Activated B cell treated with CpG ODN at 0.5 μM for 24 hours (primary cell): ENCODE measurements at regions of chr7 and their contacts with region 1.

Region 1: DNA sequence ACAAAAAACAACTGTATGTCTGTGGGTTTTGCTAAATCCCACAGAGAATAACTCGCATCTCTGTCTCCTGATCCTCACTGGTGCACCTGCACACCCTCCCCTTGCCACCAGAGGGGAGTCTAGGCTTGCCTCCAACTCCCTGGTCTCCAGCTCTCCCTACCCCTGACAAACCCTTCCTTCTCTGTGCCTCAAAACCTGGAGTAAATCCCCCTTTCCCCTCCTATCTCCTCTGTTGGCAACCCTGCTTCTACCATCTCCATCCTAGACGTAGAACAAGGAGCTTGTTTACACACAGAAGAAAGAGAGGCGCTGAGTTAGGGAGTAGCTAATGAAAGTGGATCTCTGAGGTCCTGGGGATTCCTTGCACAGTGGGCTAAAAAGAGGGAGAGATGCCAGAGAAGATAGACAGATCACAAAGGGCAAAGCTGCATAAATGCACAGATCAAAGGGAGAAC is 6.0 kb downstream of the MBLAC1 start:
- DNase-seq: peak; percentile 50
- ATAC-seq: peak; percentile 89
- H3K4me3 Mint-ChIP-seq: no peak overlapping the region
- H3K27ac Mint-ChIP-seq: no peak overlapping the region
- H3K4me1 Mint-ChIP-seq: peaks cover 18% of the 10 kb centered on the region
- H3K27me3 Mint-ChIP-seq: no peaks in the 10 kb centered on the region
- CTCF ChIP-seq: peak; percentile 92

Region 2: GRCh38 chr7:99975782-99976521 is 156.8 kb before region 1 on chr7 and contains the start of gene AZGP1:
- CTCF ChIA-PET with region 1: interaction called, 10 read pairs
- POLR2A ChIA-PET with region 1: no interaction called
- intact Hi-C with region 1: loop called (anchors 1 kb)
- DNase-seq: no peak
- ATAC-seq: no peak
- H3K4me3 Mint-ChIP-seq: no peak within 1 kb of the TSS
- H3K27ac Mint-ChIP-seq: no peak within 1 kb of the TSS
- H3K4me1 Mint-ChIP-seq: peaks cover 3% of the 10 kb centered on the region
- H3K27me3 Mint-ChIP-seq: peaks cover 22% of the 10 kb centered on the region
- CTCF ChIP-seq: no peak
- total RNA-seq, gene AZGP1: not detected in 2 replicates

Region 3: GRCh38 chr7:100101016-100101862 is 31.5 kb before region 1 on chr7 and contains the starts of genes AP4M1 and MCM7:
- CTCF ChIA-PET with region 1: interaction called, 4 read pairs
- POLR2A ChIA-PET with region 1: interaction called, 15 read pairs
- intact Hi-C with region 1: loop called (anchors 1 kb)
- DNase-seq: peak; percentile 92
- ATAC-seq: peak; percentile 86
- H3K4me3 Mint-ChIP-seq: peak within 1 kb of the TSS; percentile 92
- H3K27ac Mint-ChIP-seq: peak within 1 kb of the TSS; percentile 87
- H3K4me1 Mint-ChIP-seq: peaks cover 32% of the 10 kb centered on the region
- H3K27me3 Mint-ChIP-seq: no peaks in the 10 kb centered on the region
- CTCF ChIP-seq: no peak
- total RNA-seq, gene AP4M1: 11.1 and 12.5 TPM in 2 replicates
- total RNA-seq, gene MCM7: 99.7 and 104 TPM in 2 replicates

Region 4: GRCh38 chr7:100190048-100190711 is 57.5 kb after region 1 on chr7:
- CTCF ChIA-PET with region 1: interaction called, 8 read pairs
- POLR2A ChIA-PET with region 1: no interaction called
- intact Hi-C with region 1: loop called (anchors 1 kb)
- DNase-seq: no peak
- ATAC-seq: peak; percentile 74
- H3K4me3 Mint-ChIP-seq: peak overlapping the region; percentile 32
- H3K27ac Mint-ChIP-seq: peak overlapping the region; percentile 91
- H3K4me1 Mint-ChIP-seq: peaks cover 57% of the 10 kb centered on the region
- H3K27me3 Mint-ChIP-seq: no peaks in the 10 kb centered on the region
- CTCF ChIP-seq: no peak

Region 5: DNA sequence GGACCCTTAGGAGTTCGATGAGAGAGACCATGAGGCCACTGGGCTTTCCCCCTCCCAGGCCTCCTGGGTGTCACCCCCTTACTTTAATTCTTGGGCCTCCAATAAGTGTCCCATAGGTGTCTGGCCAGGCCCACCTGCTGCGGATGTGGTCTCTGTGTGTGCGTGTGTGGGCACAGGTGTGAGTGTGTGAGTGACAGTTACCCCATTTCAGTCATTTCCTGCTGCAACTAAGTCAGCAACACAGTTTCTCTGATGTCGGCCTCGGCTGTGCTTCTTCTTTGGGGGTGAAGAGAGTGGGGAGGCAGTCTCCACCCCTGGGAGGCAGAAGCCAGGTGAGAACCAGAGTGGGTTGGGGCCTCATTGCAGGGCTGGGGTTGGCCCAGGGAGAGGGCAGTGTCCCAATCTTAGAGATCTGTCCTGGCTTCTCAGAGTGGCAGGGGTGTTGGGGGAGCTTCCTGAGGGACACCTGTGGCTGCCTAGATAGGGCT is 88.6 kb after region 1 on chr7:
- CTCF ChIA-PET with region 1: interaction called, 34 read pairs
- POLR2A ChIA-PET with region 1: interaction called, 10 read pairs
- intact Hi-C with region 1: loop called (anchors 1 kb)
- DNase-seq: peak; percentile 48
- ATAC-seq: peak; percentile 40
- H3K4me3 Mint-ChIP-seq: peak overlapping the region; percentile 86
- H3K27ac Mint-ChIP-seq: peak overlapping the region; percentile 95
- H3K4me1 Mint-ChIP-seq: peaks cover 84% of the 10 kb centered on the region
- H3K27me3 Mint-ChIP-seq: no peaks in the 10 kb centered on the region
- CTCF ChIP-seq: no peak

Region 6: GRCh38 chr7:100369105-100369504 is 236.4 kb after region 1 on chr7:
- CTCF ChIA-PET with region 1: no interaction called
- POLR2A ChIA-PET with region 1: interaction called, 11 read pairs
- intact Hi-C with region 1: no loop called
- DNase-seq: peak; percentile 69
- ATAC-seq: peak; percentile 80
- H3K4me3 Mint-ChIP-seq: peak overlapping the region; percentile 44
- H3K27ac Mint-ChIP-seq: peak overlapping the region; percentile 91
- H3K4me1 Mint-ChIP-seq: peaks cover 92% of the 10 kb centered on the region
- H3K27me3 Mint-ChIP-seq: no peaks in the 10 kb centered on the region
- CTCF ChIP-seq: no peak

Region 7: GRCh38 chr7:100611974-100612729 is 479.4 kb after region 1 on chr7 and contains the start of gene MOSPD3:
- CTCF ChIA-PET with region 1: no interaction called
- POLR2A ChIA-PET with region 1: interaction called, 12 read pairs
- intact Hi-C with region 1: no loop called
- DNase-seq: peak; percentile 99
- ATAC-seq: peak; percentile 91
- H3K4me3 Mint-ChIP-seq: peak within 1 kb of the TSS; percentile 99
- H3K27ac Mint-ChIP-seq: peak within 1 kb of the TSS; percentile 100
- H3K4me1 Mint-ChIP-seq: peaks cover 19% of the 10 kb centered on the region
- H3K27me3 Mint-ChIP-seq: no peaks in the 10 kb centered on the region
- CTCF ChIP-seq: no peak
- total RNA-seq, gene MOSPD3: 10.5 and 11.9 TPM in 2 replicates

Region 8: DNA sequence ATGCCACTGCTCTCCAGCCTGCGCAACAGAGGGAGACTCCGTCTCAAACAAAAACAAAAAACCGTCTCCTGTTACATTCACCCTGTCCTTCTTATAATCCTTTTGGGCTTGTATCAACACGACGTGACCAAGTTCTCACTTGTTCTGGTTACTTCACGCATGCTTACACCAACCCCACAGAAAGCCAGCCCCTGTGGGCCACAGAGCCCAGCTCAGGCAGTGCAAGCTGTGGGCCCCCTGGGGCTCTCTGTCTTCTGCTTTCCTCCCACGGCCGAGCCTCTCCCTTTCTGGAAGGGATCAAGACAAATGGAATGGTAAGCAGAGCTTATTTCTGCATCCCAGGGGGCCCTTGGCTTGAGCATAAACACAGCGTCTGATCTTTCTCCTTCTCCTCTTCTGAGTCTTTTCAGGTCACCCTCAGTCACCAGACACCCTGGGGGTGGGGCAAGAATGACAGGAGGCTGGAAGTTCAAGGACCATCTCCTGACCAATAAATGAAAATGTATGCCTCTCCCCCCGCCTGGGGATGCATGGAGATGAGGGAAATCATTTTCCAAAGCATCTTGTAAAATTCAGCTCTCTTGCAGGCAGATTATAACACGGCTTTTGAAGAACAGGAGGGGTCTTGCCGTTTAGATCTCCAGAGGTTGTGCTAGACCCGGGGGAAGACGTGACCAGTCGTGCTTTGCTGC is 933.6 kb after region 1 on chr7:
- CTCF ChIA-PET with region 1: no interaction called
- POLR2A ChIA-PET with region 1: no interaction called
- intact Hi-C with region 1: no loop called
- DNase-seq: no peak
- ATAC-seq: no peak
- H3K4me3 Mint-ChIP-seq: no peak overlapping the region
- H3K27ac Mint-ChIP-seq: no peak overlapping the region
- H3K4me1 Mint-ChIP-seq: no peaks in the 10 kb centered on the region
- H3K27me3 Mint-ChIP-seq: peaks cover 29% of the 10 kb centered on the region
- CTCF ChIP-seq: no peak